ENCODE measurements at regions of chr5 and their contacts with region 1.

Region 1: GRCh38 chr5:154683101-154683880 is 71.9 kb upstream of the LARP1 start:
- DNase-seq: peak in 2 of 3 donors; percentile 40 to 70
- H3K4me3 ChIP-seq: peak overlapping the region; percentile 51 to 74 (median 65)
- H3K4me3 Mint-ChIP-seq: peak overlapping the region; percentile 78 to 83
- H3K27ac ChIP-seq: peak overlapping the region; percentile 74
- H3K27ac Mint-ChIP-seq: peak overlapping the region; percentile 57 to 93 (median 82)
- H3K4me1 ChIP-seq: peaks cover 13 to 23% of the 10 kb centered on the region in 2 donors
- H3K4me1 Mint-ChIP-seq: peaks cover 17% of the 10 kb centered on the region
- H3K27me3 ChIP-seq: no peaks in the 10 kb centered on the region
- H3K27me3 Mint-ChIP-seq: peaks cover 0 to 4% (median 1%) of the 10 kb centered on the region in 3 donors
- CTCF ChIP-seq: no peak

Region 2: GRCh38 chr5:154449786-154450185 is 233.5 kb before region 1 on chr5:
- intact Hi-C with region 1: no loop called
- DNase-seq: no peak
- H3K4me3 ChIP-seq: no peak overlapping the region
- H3K4me3 Mint-ChIP-seq: no peak overlapping the region
- H3K27ac ChIP-seq: no peak overlapping the region
- H3K27ac Mint-ChIP-seq: no peak overlapping the region
- H3K4me1 ChIP-seq: peaks cover 30 to 33% of the 10 kb centered on the region in 2 donors
- H3K4me1 Mint-ChIP-seq: peaks cover 32% of the 10 kb centered on the region
- H3K27me3 ChIP-seq: no peaks in the 10 kb centered on the region
- H3K27me3 Mint-ChIP-seq: peaks cover 0 to 5% (median 0%) of the 10 kb centered on the region in 3 donors
- CTCF ChIP-seq: no peak

Region 3: DNA sequence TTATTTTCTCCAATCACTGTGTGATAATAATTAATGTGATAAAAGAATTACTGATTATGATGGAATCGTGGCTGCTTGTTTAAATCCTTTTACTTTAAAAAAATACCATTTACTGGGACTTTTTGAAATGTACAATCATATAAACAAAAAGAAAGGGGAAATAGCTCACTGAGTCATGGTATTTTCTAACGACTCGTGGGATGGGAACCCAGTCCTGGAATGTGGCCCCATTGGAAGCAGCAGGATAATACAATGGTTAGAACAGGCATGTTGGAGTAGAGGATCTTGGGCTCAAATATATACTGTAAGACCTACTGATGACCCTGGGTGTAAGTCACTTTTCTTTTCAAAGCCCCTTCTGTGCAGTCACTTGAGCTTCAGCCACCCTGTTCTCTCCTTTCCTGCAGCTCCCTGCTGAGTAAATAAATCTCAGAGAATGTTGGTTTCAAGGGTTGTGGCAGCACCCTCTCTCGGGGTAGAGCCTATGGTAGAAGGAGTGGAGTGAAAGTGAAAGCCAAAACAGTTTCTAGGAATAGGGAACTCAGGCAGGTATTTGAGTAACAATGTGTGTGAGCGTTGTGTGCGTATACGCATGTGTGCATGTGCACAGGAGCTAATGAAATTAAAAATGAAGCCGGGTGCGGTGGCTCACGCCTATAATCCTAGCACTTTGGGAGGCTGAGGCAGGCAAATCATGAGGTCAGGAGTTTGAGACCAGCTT is 31.1 kb after region 1 on chr5:
- intact Hi-C with region 1: loop called in 1 of 2 experiments (anchors 5 kb)
- DNase-seq: peak; percentile 63 to 79 (median 76)
- H3K4me3 ChIP-seq: peak overlapping the region; percentile 20 to 78 (median 57)
- H3K4me3 Mint-ChIP-seq: peak overlapping the region; percentile 78 to 92
- H3K27ac ChIP-seq: peak overlapping the region; percentile 30 to 94
- H3K27ac Mint-ChIP-seq: peak overlapping the region; percentile 92 to 98 (median 95)
- H3K4me1 ChIP-seq: peaks cover 17% of the 10 kb centered on the region in 2 donors
- H3K4me1 Mint-ChIP-seq: peaks cover 32% of the 10 kb centered on the region
- H3K27me3 ChIP-seq: no peaks in the 10 kb centered on the region
- H3K27me3 Mint-ChIP-seq: no peaks in the 10 kb centered on the region
- CTCF ChIP-seq: no peak